ENCODE measurements at regions of chr11 and their contacts with region 1.

Region 1: DNA sequence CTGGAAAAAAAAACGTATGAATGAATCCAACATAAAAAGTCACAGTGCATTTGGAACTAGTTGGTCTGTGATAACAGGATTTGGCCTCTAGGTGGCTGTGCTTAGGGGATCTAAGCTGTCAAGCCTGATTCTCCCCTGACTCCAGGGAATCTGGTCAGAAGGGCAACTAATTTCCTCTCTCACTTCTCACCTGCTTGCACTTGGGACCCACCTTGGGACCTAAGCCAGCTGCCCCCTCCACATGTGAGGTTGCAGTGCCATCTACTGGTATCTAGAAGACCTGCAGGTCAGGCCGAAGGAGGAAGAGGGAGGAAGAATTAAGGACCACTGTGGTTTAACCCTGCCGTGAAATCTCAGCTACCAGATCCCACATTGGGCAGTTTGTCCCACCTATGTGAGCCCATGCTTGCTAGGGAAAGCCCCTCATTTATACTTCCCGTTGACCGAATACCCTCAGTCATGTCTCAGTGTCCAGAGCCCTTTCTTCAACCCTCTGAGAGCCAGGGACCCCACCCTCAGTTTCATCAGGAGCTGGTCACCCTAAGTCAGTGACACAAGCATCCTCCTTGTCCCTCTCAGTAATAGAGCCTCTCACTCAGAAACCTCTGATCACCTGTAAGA is 33.2 kb upstream of the CAVIN3 start:
- DNase-seq: peak; percentile 71
- ATAC-seq: peak; percentile 45
- H3K4me3 Mint-ChIP-seq: no peak overlapping the region
- H3K27ac Mint-ChIP-seq: no peak overlapping the region
- H3K4me1 Mint-ChIP-seq: peaks cover 25% of the 10 kb centered on the region
- H3K27me3 Mint-ChIP-seq: peaks cover 3% of the 10 kb centered on the region

Region 2: DNA sequence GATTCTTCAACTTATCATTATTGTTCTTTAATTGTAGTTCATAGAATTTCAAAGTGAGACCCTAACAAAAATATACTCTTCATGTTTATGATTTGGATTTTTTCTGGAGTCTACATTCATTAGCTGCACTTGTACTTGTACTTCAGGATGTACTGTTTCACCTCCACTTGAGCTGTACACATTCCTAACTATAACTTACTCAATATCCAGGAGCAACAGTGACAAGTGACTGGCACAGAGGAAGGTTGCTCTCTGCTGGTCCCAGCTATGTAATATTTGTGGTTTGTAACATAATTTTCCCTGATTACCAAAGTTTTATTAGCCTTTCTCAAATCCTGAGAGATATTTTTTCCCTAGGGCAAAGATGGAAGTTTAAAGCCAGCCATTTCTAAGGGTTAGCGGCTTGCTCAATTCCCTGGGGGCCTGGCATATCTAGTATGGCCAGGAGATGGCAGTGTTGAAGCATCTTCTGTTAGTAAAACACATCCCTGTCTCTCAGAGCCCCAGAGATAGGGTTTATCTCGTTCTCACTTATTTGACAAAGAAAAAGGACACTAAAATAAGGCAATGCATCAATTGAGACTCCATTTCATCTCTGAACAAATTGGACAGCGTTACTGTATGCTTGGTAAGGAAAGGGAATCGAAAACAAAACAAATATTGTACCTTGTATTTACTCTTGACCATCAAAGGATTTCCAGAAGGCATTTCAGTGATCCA is 1229.5 kb before region 1 on chr11:
- CTCF ChIA-PET with region 1: no interaction called
- POLR2A ChIA-PET with region 1: no interaction called
- intact Hi-C with region 1: loop called in 1 of 2 experiments (anchors 10 kb)
- DNase-seq: peak; percentile 69
- ATAC-seq: peak; percentile 60
- H3K4me3 Mint-ChIP-seq: no peak overlapping the region
- H3K27ac Mint-ChIP-seq: no peak overlapping the region
- H3K4me1 Mint-ChIP-seq: no peaks in the 10 kb centered on the region
- H3K27me3 Mint-ChIP-seq: peaks cover 17% of the 10 kb centered on the region

Region 3: DNA sequence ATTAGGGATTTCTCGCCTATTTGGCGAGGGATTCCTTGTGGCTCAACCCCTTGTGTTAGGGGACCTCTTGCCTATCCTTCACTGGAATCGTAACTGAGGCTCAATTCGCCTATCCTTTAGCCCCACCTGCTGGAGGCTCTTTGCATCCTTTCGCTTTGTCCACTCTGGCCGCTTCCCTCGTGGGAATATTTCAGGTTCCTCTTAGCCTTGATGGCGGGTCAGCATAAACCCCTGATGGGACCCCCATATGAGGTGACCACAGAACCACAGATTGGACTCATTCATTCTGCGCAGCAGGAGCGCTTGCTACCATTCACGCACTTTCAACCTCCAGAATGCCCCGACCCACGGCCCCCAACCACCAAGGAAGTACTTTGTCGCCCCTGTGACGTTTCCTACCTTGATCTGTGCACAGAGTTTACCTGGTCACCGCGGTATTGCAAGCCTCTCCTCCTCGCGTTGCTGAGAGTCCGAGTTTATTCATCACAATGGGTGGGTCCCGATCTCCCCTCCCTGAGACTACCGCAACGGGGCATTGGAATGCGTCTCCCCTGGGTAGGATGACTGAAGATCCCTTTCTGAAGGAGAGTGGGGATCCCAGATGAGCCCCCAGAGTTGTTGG is 544.9 kb before region 1 on chr11 and contains the start of gene OR52N2:
- CTCF ChIA-PET with region 1: no interaction called
- POLR2A ChIA-PET with region 1: no interaction called
- intact Hi-C with region 1: loop called in 1 of 2 experiments (anchors 5 kb)
- DNase-seq: peak; percentile 82
- ATAC-seq: peak; percentile 92
- H3K4me3 Mint-ChIP-seq: peak within 1 kb of the TSS; percentile 79
- H3K27ac Mint-ChIP-seq: peak within 1 kb of the TSS; percentile 23
- H3K4me1 Mint-ChIP-seq: peaks cover 8% of the 10 kb centered on the region
- H3K27me3 Mint-ChIP-seq: peaks cover 16% of the 10 kb centered on the region
- total RNA-seq, gene OR52N2: not detected

Region 4: DNA sequence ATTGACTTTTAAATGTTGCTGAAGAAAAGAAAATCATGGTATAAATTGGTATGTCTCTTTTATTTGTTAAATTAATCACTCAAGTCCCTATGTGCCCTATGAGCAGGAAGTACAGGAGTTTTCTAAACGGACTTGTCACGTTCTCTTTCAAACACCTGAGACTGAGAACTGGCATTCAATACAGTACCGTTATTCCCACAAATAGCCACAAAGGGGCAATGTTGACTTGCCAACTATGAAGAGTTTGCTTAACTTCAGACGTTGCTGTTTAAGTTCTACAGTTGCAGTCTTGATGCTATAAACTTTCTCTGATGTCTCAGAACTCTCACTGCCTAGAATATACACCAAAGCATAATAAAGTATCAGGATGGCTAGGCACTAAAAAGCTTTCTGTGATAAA is 330.5 kb before region 1 on chr11:
- CTCF ChIA-PET with region 1: interaction called, 4 read pairs
- POLR2A ChIA-PET with region 1: no interaction called
- intact Hi-C with region 1: loop called (anchors 1 to 5 kb)
- DNase-seq: no peak
- ATAC-seq: peak; percentile 55
- H3K4me3 Mint-ChIP-seq: no peak overlapping the region
- H3K27ac Mint-ChIP-seq: no peak overlapping the region
- H3K4me1 Mint-ChIP-seq: no peaks in the 10 kb centered on the region
- H3K27me3 Mint-ChIP-seq: peaks cover 21% of the 10 kb centered on the region

Region 5: GRCh38 chr11:6258571-6259081 is 94.9 kb before region 1 on chr11:
- CTCF ChIA-PET with region 1: interaction called, 11 read pairs
- POLR2A ChIA-PET with region 1: no interaction called
- intact Hi-C with region 1: no loop called
- DNase-seq: peak; percentile 34
- ATAC-seq: peak; percentile 43
- H3K4me3 Mint-ChIP-seq: peak overlapping the region; percentile 40
- H3K27ac Mint-ChIP-seq: no peak overlapping the region
- H3K4me1 Mint-ChIP-seq: no peaks in the 10 kb centered on the region
- H3K27me3 Mint-ChIP-seq: peaks cover 14% of the 10 kb centered on the region

Region 6: GRCh38 chr11:6315811-6316425 is 37.6 kb before region 1 on chr11:
- CTCF ChIA-PET with region 1: interaction called, 15 read pairs
- POLR2A ChIA-PET with region 1: interaction called, 5 read pairs
- intact Hi-C with region 1: loop called (anchors 1 to 2 kb)
- DNase-seq: peak; percentile 59
- ATAC-seq: peak; percentile 33
- H3K4me3 Mint-ChIP-seq: no peak overlapping the region
- H3K27ac Mint-ChIP-seq: no peak overlapping the region
- H3K4me1 Mint-ChIP-seq: peaks cover 12% of the 10 kb centered on the region
- H3K27me3 Mint-ChIP-seq: peaks cover 42% of the 10 kb centered on the region

Region 7: GRCh38 chr11:6755303-6755952 is 402.0 kb after region 1 on chr11:
- CTCF ChIA-PET with region 1: no interaction called
- POLR2A ChIA-PET with region 1: no interaction called
- intact Hi-C with region 1: no loop called
- DNase-seq: peak; percentile 38
- ATAC-seq: peak; percentile 63
- H3K4me3 Mint-ChIP-seq: no peak overlapping the region
- H3K27ac Mint-ChIP-seq: no peak overlapping the region
- H3K4me1 Mint-ChIP-seq: peaks cover 10% of the 10 kb centered on the region
- H3K27me3 Mint-ChIP-seq: no peaks in the 10 kb centered on the region

Region 8: GRCh38 chr11:6876914-6877313 is 523.4 kb after region 1 on chr11:
- CTCF ChIA-PET with region 1: no interaction called
- POLR2A ChIA-PET with region 1: no interaction called
- intact Hi-C with region 1: no loop called
- DNase-seq: no peak
- ATAC-seq: no peak
- H3K4me3 Mint-ChIP-seq: no peak overlapping the region
- H3K27ac Mint-ChIP-seq: no peak overlapping the region
- H3K4me1 Mint-ChIP-seq: no peaks in the 10 kb centered on the region
- H3K27me3 Mint-ChIP-seq: peaks cover 9% of the 10 kb centered on the region

Measured in activated CD4-positive, alpha-beta T cell treated with anti-CD3 and anti-CD28 coated beads for 36 hours (primary cell).